Endothelial cell of umbilical vein (primary cell): ENCODE measurements at regions of chr9 and their contacts with region 1.

Region 1: GRCh38 chr9:4315582-4316215 is 15.8 kb upstream of the GLIS3 start:
- DNase-seq: peak; percentile 85
- H3K4me3 ChIP-seq: no peak overlapping the region
- H3K27ac ChIP-seq: no peak overlapping the region
- H3K4me1 ChIP-seq: peaks cover 4% of the 10 kb centered on the region
- H3K27me3 ChIP-seq: no peaks in the 10 kb centered on the region
- CTCF ChIP-seq: peak; percentile 89 to 93
- POLR2A ChIP-seq: no peak

Region 2: GRCh38 chr9:4207881-4208615 is 107.7 kb before region 1 on chr9:
- CTCF ChIA-PET with region 1: no interaction called
- POLR2A ChIA-PET with region 1: no interaction called
- dilution Hi-C with region 1: no loop called
- intact Hi-C with region 1: no loop called
- DNase-seq: no peak
- H3K4me3 ChIP-seq: no peak overlapping the region
- H3K27ac ChIP-seq: no peak overlapping the region
- H3K4me1 ChIP-seq: no peaks in the 10 kb centered on the region
- H3K27me3 ChIP-seq: peaks cover 0 to 5% of the 10 kb centered on the region in 2 experiments
- CTCF ChIP-seq: no peak
- POLR2A ChIP-seq: no peak

Region 3: DNA sequence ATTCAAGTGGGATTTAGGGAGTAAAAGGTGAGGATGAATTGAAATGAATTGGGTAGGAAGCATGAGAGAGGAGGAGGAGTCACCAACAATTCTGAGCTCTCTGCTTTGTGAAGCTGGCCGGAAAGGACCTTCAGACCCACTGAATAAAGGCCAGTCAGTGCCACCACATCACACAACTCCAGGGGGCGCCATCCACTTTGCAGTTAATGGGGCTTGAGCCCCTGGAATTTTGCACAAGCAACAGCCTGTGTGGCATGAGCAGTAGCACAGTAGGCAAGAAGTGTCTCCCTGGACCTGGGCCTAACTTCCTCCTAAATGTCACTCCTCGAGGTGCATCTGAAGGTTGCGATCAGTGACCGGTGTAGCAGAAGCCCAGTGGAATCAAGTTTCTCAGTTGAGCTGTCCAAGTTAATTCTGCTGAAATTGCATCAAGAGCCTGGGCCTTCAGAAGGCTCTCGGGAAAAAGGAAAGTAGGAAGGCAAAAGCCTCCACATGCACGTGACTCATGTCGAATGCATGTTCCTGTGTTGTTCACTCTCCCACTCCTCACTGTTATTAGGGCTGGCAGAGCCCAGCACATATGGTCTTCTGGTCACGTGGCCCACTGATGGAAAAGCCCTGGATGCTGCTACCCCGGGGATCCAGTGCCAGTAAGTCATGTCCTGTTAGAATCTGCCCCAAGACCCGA is 11.9 kb after region 1 on chr9:
- CTCF ChIA-PET with region 1: interaction called, 29 read pairs
- POLR2A ChIA-PET with region 1: interaction called, 4 read pairs
- dilution Hi-C with region 1: no loop called
- intact Hi-C with region 1: no loop called
- DNase-seq: peak; percentile 38
- H3K4me3 ChIP-seq: no peak overlapping the region
- H3K27ac ChIP-seq: no peak overlapping the region
- H3K4me1 ChIP-seq: peaks cover 13% of the 10 kb centered on the region
- H3K27me3 ChIP-seq: no peaks in the 10 kb centered on the region
- CTCF ChIP-seq: no peak
- POLR2A ChIP-seq: no peak

Region 4: GRCh38 chr9:4356306-4356705 is 40.6 kb after region 1 on chr9:
- CTCF ChIA-PET with region 1: interaction called, 14 read pairs
- POLR2A ChIA-PET with region 1: no interaction called
- dilution Hi-C with region 1: no loop called
- intact Hi-C with region 1: no loop called
- DNase-seq: peak; percentile 88
- H3K4me3 ChIP-seq: no peak overlapping the region
- H3K27ac ChIP-seq: no peak overlapping the region
- H3K4me1 ChIP-seq: no peaks in the 10 kb centered on the region
- H3K27me3 ChIP-seq: peaks cover 0 to 13% of the 10 kb centered on the region in 2 experiments
- CTCF ChIP-seq: no peak
- POLR2A ChIP-seq: no peak

Region 5: DNA sequence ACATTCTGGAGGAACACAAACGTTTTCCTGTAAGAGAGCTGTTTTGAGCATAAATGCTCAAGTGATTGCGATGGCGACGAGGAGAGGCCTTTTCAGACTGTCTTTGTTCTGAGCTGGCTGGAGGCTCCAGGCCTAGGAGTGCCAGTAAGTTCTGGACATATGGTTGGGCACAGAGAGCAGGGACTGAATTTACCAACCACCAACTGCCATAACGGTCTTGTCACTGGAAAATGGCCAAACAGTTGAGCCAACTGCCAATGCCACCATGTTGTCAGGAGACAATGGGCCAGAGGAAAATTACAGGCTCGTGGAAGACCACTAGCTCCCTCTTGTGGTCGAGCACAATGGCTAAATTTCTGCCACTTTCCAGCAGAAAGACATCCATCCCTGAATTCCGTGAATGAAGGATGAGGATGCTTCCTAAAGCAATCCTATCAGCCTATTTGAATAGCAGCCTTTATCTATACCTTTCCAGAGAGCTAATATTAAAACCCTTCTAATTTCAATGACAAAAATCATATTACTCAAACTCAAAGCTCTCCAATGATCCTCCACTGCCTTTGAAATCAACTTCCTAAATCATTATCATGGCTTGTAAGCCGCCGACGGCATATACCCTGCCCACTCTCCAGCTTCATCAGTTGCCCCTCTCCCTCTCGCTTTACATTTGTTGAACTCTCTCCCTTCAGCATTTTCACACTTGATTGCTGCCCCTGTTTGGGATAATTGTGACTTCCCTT is 51.1 kb after region 1 on chr9:
- CTCF ChIA-PET with region 1: interaction called, 164 read pairs
- POLR2A ChIA-PET with region 1: no interaction called
- dilution Hi-C with region 1: no loop called
- intact Hi-C with region 1: loop called (anchors 1 kb)
- DNase-seq: peak; percentile 53
- H3K4me3 ChIP-seq: no peak overlapping the region
- H3K27ac ChIP-seq: no peak overlapping the region
- H3K4me1 ChIP-seq: no peaks in the 10 kb centered on the region
- H3K27me3 ChIP-seq: peaks cover 2 to 5% of the 10 kb centered on the region in 2 experiments
- CTCF ChIP-seq: peak; percentile 74 to 81
- POLR2A ChIP-seq: no peak

Region 6: GRCh38 chr9:4375424-4376200 is 59.9 kb after region 1 on chr9:
- CTCF ChIA-PET with region 1: interaction called, 164 read pairs
- POLR2A ChIA-PET with region 1: no interaction called
- dilution Hi-C with region 1: no loop called
- intact Hi-C with region 1: no loop called
- DNase-seq: peak; percentile 47
- H3K4me3 ChIP-seq: no peak overlapping the region
- H3K27ac ChIP-seq: no peak overlapping the region
- H3K4me1 ChIP-seq: no peaks in the 10 kb centered on the region
- H3K27me3 ChIP-seq: peaks cover 4 to 10% of the 10 kb centered on the region in 2 experiments
- CTCF ChIP-seq: peak; percentile 18 to 23
- POLR2A ChIP-seq: no peak